ENCODE measurements at regions of chr5 and their contacts with region 1.

Region 1: GRCh38 chr5:174327317-174328236 is 282.1 kb downstream of the NSG2 start:
- DNase-seq: peak; percentile 92
- ATAC-seq: peak; percentile 92
- H3K4me3 Mint-ChIP-seq: no peak overlapping the region
- H3K27ac Mint-ChIP-seq: no peak overlapping the region; the same call in 1 of the 2 replicates
- H3K4me1 Mint-ChIP-seq: peaks cover 32% of the 10 kb centered on the region
- H3K27me3 Mint-ChIP-seq: no peaks in the 10 kb centered on the region; the same call in 1 of the 2 replicates
- CTCF ChIP-seq: peak; percentile 79

Region 2: GRCh38 chr5:174222891-174223290 is 104.7 kb before region 1 on chr5:
- CTCF ChIA-PET with region 1: no interaction called
- POLR2A ChIA-PET with region 1: no interaction called
- DNase-seq: peak; percentile 34
- ATAC-seq: peak; percentile 78
- H3K4me3 Mint-ChIP-seq: no peak overlapping the region
- H3K27ac Mint-ChIP-seq: no peak overlapping the region
- H3K4me1 Mint-ChIP-seq: 0 out of 2 replicates have a peak, but pooled peaks cover 3% of the 10 kb centered on the region
- H3K27me3 Mint-ChIP-seq: peaks cover 6% of the 10 kb centered on the region; the same call in 1 of the 2 replicates
- CTCF ChIP-seq: no peak

Region 3: DNA sequence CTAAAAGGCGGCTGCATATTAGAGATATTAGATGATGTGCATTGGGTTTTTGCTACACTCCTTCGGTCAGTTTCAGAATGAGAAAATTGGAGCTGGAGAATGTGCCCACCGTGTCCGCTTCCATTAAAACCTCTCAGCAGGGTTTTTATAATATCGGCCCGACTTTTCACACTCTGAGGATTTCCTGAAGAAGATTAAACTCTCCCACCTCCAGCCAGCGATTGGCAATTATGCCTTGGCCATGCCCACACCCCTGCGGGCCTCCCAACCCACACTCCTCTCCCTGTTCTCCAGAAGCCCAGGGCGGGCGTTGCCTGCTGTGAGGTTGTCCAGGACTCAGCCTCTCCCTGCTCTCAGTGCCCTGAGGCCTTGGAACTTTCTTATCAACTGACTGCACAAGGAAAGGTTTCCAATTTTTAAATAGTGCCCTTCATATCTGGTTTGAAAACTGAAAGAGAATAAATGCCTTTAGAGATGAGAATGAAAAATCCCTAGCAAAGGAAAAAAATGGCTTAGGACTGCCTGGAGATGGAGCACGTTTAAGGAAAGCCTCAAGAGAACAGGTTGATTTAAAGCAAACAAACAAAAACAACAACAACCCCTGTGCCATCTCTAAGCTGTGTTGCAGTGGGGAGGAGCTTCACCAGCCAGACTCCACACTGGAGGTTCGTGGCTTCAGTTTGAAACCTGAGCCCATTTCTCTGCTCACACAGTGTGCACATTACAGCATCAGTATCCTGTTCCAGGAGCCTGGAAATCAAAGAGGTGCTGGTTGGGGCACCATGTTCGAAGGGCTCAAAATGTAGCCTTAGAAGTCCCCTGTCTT is 10.8 kb after region 1 on chr5:
- CTCF ChIA-PET with region 1: interaction called, 14 read pairs
- POLR2A ChIA-PET with region 1: no interaction called
- DNase-seq: no peak
- ATAC-seq: 0 out of 2 replicates have a peak, but pooled peaks have one; percentile 41
- H3K4me3 Mint-ChIP-seq: no peak overlapping the region
- H3K27ac Mint-ChIP-seq: no peak overlapping the region; the same call in 1 of the 2 replicates
- H3K4me1 Mint-ChIP-seq: peaks cover 21% of the 10 kb centered on the region
- H3K27me3 Mint-ChIP-seq: no peaks in the 10 kb centered on the region; the same call in none of the 2 replicates
- CTCF ChIP-seq: no peak

Region 4: GRCh38 chr5:174344340-174344739 is 16.8 kb after region 1 on chr5:
- CTCF ChIA-PET with region 1: interaction called, 11 read pairs
- POLR2A ChIA-PET with region 1: no interaction called
- DNase-seq: no peak
- ATAC-seq: peak; percentile 85
- H3K4me3 Mint-ChIP-seq: no peak overlapping the region
- H3K27ac Mint-ChIP-seq: no peak overlapping the region
- H3K4me1 Mint-ChIP-seq: peaks cover 5% of the 10 kb centered on the region
- H3K27me3 Mint-ChIP-seq: no peaks in the 10 kb centered on the region; the same call in 1 of the 2 replicates
- CTCF ChIP-seq: no peak

Region 5: GRCh38 chr5:174409070-174409469 is 81.5 kb after region 1 on chr5:
- CTCF ChIA-PET with region 1: interaction called, 13 read pairs
- POLR2A ChIA-PET with region 1: no interaction called
- DNase-seq: peak; percentile 25
- ATAC-seq: peak; percentile 59; the same call in 1 of the 2 replicates
- H3K4me3 Mint-ChIP-seq: no peak overlapping the region
- H3K27ac Mint-ChIP-seq: no peak overlapping the region
- H3K4me1 Mint-ChIP-seq: no peaks in the 10 kb centered on the region
- H3K27me3 Mint-ChIP-seq: no peaks in the 10 kb centered on the region
- CTCF ChIP-seq: no peak

Region 6: GRCh38 chr5:174464504-174465165 is 137.1 kb after region 1 on chr5:
- CTCF ChIA-PET with region 1: no interaction called
- POLR2A ChIA-PET with region 1: no interaction called
- DNase-seq: no peak
- ATAC-seq: peak; percentile 66
- H3K4me3 Mint-ChIP-seq: no peak overlapping the region
- H3K27ac Mint-ChIP-seq: no peak overlapping the region
- H3K4me1 Mint-ChIP-seq: peaks cover 18% of the 10 kb centered on the region
- H3K27me3 Mint-ChIP-seq: peaks cover 3% of the 10 kb centered on the region; the same call in 1 of the 2 replicates
- CTCF ChIP-seq: no peak